Left ventricle myocardium superior (tissue), 1 donor: ENCODE measurements at regions of chr7 and their contacts with region 1.

Region 1: DNA sequence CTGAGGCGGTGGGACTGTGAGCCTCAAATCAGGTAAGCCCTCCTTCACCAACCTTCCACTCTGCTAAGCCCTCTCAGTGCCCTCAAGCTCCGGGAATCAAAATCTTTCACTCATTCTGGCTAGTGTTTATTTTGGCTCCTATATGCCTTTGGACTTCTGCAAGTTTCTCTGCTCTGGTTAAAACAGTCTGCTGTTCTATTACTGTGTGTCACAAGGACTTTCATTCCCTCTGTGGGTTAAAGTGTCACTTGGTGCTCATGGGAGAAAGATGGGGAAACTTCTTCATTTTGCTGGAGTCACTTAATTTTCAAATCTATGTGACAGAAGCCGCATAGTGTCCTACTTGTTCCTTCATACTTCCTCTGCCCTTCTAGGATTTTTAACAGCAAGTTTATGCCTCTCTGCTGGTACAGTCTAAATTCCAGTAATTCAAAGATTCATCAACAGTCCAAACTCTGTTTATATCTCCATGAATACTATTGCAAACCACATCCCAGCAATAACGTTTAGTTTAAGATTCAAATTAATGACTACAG is 61.3 kb downstream of the CD36 start:
- DNase-seq: no peak
- ATAC-seq: peak; percentile 55

Region 2: GRCh38 chr7:80151274-80151665 is 548.5 kb before region 1 on chr7:
- intact Hi-C with region 1: no loop called
- DNase-seq: no peak
- ATAC-seq: no peak

Region 3: GRCh38 chr7:80752954-80753690 is 53.3 kb after region 1 on chr7:
- intact Hi-C with region 1: loop called (anchors 10 kb)
- DNase-seq: no peak
- ATAC-seq: no peak

Region 4: DNA sequence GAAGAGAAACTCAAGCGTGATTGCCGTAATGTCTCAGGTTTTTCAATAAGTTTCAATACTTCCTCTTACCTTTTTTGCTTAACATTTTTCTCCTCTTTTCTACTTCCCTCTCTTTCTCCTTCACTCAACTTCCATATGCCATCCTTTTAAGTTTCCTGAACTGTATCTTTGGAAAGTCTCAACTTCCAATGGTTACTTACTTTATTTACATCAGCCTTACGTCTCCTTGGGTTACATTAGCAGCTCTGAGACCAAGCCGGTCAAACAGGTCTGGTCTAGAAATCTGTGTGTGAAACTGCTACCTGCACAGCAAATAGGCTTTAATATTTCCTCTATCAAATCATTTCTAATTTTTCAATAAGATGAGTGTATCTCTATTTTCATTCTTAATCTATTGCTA is 222.4 kb after region 1 on chr7:
- intact Hi-C with region 1: loop called (anchors 10 kb)
- DNase-seq: no peak
- ATAC-seq: no peak

Region 5: DNA sequence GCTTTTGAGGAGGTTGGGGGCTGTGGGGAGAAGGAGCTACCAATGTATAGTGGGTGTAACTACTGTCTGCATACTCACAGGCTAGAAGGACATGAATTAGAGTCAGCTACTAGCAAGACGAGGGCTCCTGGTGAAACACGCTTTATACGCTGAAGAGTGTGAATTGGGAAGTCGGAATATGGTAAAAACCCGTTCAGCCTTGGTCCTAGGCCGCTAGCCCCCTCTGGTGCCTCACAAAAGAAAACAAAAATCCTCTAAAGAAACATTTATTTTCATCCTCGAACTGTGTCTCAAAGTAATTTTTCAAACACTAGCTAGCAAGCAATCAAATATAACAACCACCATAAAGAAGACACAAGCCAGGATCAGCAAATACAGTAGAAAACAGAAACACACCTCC is 557.2 kb after region 1 on chr7:
- intact Hi-C with region 1: loop called (anchors 5 kb)
- DNase-seq: peak; percentile 36
- ATAC-seq: peak; percentile 53

Region 6: GRCh38 chr7:81457852-81458522 is 758.2 kb after region 1 on chr7:
- intact Hi-C with region 1: loop called (anchors 5 kb)
- DNase-seq: no peak
- ATAC-seq: no peak